ENCODE measurements at regions of chr12 and their contacts with region 1.

Region 1: GRCh38 chr12:2179953-2180736 is 127.4 kb downstream of the CACNA1C start:
- DNase-seq: no peak

Region 2: GRCh38 chr12:1744932-1745331 is 435.2 kb before region 1 on chr12:
- in situ Hi-C with region 1: no loop called
- DNase-seq: no peak

Region 3: GRCh38 chr12:2084553-2085296 is 95.4 kb before region 1 on chr12:
- in situ Hi-C with region 1: loop called (anchors 25 kb)
- DNase-seq: no peak

Region 4: GRCh38 chr12:2998789-2999264 is 818.7 kb after region 1 on chr12:
- in situ Hi-C with region 1: no loop called
- DNase-seq: no peak

Measured in KBM-7 (cell line).